ENCODE measurements at regions of chr2 and their contacts with region 1.

Region 1: GRCh38 chr2:136225950-136226835 is 108.2 kb upstream of the CXCR4 start:
- DNase-seq: peak in 9 of 10 donors; percentile 18 to 85 (median 74)
- ATAC-seq: peak; percentile 88 to 92
- H3K4me3 Mint-ChIP-seq: peak overlapping the region in 9 of 10 donors; percentile 2 to 55 (median 32)
- H3K27ac Mint-ChIP-seq: peak overlapping the region; percentile 83 to 97 (median 92)
- H3K4me1 Mint-ChIP-seq: peaks cover 7 to 50% (median 31%) of the 10 kb centered on the region in 4 donors
- H3K27me3 Mint-ChIP-seq: no peaks in the 10 kb centered on the region

Region 2: GRCh38 chr2:135762022-135762421 is 464.2 kb before region 1 on chr2:
- POLR2A ChIA-PET with region 1: no interaction called
- DNase-seq: no peak
- ATAC-seq: no peak
- H3K4me3 Mint-ChIP-seq: no peak overlapping the region
- H3K27ac Mint-ChIP-seq: no peak overlapping the region
- H3K4me1 Mint-ChIP-seq: peaks cover 0 to 8% (median 3%) of the 10 kb centered on the region in 4 donors
- H3K27me3 Mint-ChIP-seq: no peaks in the 10 kb centered on the region

Region 3: GRCh38 chr2:136238286-136239078 is 12.3 kb after region 1 on chr2:
- POLR2A ChIA-PET with region 1: interaction called, 22 read pairs
- DNase-seq: peak in 7 of 10 donors; percentile 18 to 73 (median 51)
- ATAC-seq: peak; percentile 77 to 86
- H3K4me3 Mint-ChIP-seq: peak overlapping the region in 9 of 10 donors; percentile 11 to 61 (median 38)
- H3K27ac Mint-ChIP-seq: peak overlapping the region; percentile 87 to 96 (median 94)
- H3K4me1 Mint-ChIP-seq: peaks cover 36 to 89% (median 58%) of the 10 kb centered on the region in 4 donors
- H3K27me3 Mint-ChIP-seq: no peaks in the 10 kb centered on the region